Testis (tissue), 5 donors: ENCODE measurements at regions of chr5 and their contacts with region 1.

Region 1: GRCh38 chr5:95858661-95859326 is 36.3 kb upstream of the GLRX start:
- DNase-seq: peak; percentile 92
- H3K4me3 ChIP-seq: peak overlapping the region; percentile 1 to 20
- H3K27ac ChIP-seq: peak overlapping the region; percentile 82 to 88
- H3K4me1 ChIP-seq: peaks cover 39% of the 10 kb centered on the region
- H3K27me3 ChIP-seq: no peaks in the 10 kb centered on the region
- CTCF ChIP-seq: peak; percentile 98 to 99 (median 99)
- POLR2A ChIP-seq: no peak

Region 2: DNA sequence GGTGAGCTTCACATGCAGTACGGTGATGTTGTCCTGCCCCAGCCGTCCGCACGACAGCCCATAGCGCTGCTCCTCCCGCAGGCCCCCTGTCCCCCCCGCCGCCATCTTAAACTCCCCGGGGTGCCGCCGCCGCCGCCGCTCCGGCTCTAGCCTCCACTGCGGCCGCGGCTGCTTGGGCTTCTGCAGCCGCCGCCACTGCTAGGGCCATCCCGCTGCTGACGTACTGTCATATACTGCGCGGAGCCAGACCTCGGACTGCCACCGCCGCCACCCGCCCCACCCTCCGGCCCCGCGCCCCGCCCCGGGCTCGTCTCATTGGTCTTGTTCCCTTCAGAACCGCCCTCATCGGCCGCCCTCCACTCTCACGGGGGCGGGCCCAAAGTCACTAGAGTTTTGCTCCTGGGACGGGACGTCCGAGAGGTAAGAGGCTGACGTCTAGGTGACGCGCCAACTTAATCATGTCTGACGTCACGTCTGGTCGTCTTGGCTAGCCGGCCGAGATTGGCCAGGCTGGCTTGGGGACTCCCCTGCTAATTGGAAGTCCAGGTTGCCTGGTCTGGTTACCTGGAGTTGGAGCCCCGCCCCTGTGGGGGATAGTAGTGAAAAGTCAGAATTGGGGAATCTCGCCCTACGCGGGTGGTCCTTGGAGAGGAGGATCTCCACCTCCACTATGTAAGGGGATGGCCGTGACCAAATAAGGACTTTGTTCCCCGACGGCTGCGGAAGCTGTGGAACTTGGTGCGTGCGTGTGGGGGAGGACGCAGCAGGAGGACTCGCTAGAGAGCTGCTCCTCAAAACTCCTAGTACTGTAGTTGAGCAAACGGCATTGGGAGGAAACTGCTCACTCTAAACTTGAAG is 103.1 kb after region 1 on chr5 and contains the start of gene ELL2:
- intact Hi-C with region 1: loop called (anchors 5 kb)
- DNase-seq: peak; percentile 99
- H3K4me3 ChIP-seq: peak within 1 kb of the TSS; percentile 92 to 98
- H3K27ac ChIP-seq: peak within 1 kb of the TSS; percentile 97 to 98
- H3K4me1 ChIP-seq: peaks cover 1% of the 10 kb centered on the region
- H3K27me3 ChIP-seq: no peaks in the 10 kb centered on the region
- CTCF ChIP-seq: no peak
- POLR2A ChIP-seq: peak; percentile 66
- total RNA-seq, gene ELL2: 78.9 to 87.3 TPM

Region 3: GRCh38 chr5:96331210-96331609 is 472.4 kb after region 1 on chr5:
- intact Hi-C with region 1: loop called (anchors 5 kb)
- DNase-seq: no peak
- H3K4me3 ChIP-seq: no peak overlapping the region
- H3K27ac ChIP-seq: peak overlapping the region in 1 of 2 donors; percentile 2
- H3K4me1 ChIP-seq: peaks cover 13% of the 10 kb centered on the region
- H3K27me3 ChIP-seq: no peaks in the 10 kb centered on the region
- CTCF ChIP-seq: no peak
- POLR2A ChIP-seq: no peak

Region 4: DNA sequence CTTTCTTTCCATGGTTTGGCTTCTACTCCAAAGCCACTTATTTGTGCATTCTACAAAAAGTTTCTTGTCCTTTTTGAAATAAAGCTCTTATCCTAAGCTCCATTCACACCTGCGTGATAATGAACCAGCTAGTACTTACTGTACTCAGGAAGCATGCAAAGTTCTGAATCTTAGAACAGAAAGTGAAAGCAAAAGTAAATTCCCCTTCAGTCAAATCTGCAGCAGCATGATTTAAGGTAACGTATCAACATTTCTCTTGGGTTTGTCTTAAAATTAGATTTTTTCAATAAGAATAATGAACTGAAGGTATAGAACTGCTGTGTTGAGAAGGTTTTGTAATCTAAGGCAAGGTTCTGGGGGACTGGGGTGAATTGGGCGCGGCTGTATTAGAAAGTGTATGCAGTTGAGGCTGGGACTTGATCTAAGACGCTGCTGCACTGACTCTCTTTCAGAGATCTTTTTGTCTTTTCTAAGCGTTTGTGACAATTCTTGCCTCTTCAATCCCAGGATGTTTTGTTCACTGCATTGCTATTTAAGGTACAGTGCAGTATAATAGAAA is 1017.6 kb after region 1 on chr5 and contains the start of gene ERAP2:
- intact Hi-C with region 1: loop called (anchors 10 kb)
- DNase-seq: no peak
- H3K4me3 ChIP-seq: peak within 1 kb of the TSS; percentile 61
- H3K27ac ChIP-seq: peak within 1 kb of the TSS; percentile 65 to 78
- H3K4me1 ChIP-seq: no peaks in the 10 kb centered on the region
- H3K27me3 ChIP-seq: no peaks in the 10 kb centered on the region
- CTCF ChIP-seq: no peak
- POLR2A ChIP-seq: no peak
- total RNA-seq, gene ERAP2: 4.0 to 4.4 TPM